ENCODE measurements at regions of chr1 and their contacts with region 1.

Region 1: GRCh38 chr1:228131766-228132165 is 8.3 kb upstream of the GUK1 start:
- DNase-seq: no peak
- ATAC-seq: no peak
- H3K4me3 Mint-ChIP-seq: no peak overlapping the region
- H3K27ac Mint-ChIP-seq: no peak overlapping the region
- H3K4me1 Mint-ChIP-seq: peaks cover 14% of the 10 kb centered on the region
- H3K27me3 Mint-ChIP-seq: peaks cover 22% of the 10 kb centered on the region

Region 2: GRCh38 chr1:228109073-228109961 is 22.4 kb before region 1 on chr1 and contains the start of gene MRPL55:
- CTCF ChIA-PET with region 1: interaction called, 14 read pairs
- DNase-seq: peak; percentile 98
- ATAC-seq: peak; percentile 96
- H3K4me3 Mint-ChIP-seq: peak within 1 kb of the TSS; percentile 85
- H3K27ac Mint-ChIP-seq: peak within 1 kb of the TSS; percentile 88
- H3K4me1 Mint-ChIP-seq: peaks cover 28% of the 10 kb centered on the region
- H3K27me3 Mint-ChIP-seq: no peaks in the 10 kb centered on the region
- total RNA-seq, gene MRPL55: 51.9 to 56.4 TPM

Region 3: GRCh38 chr1:228120857-228121489 is 10.8 kb before region 1 on chr1:
- CTCF ChIA-PET with region 1: interaction called, 20 read pairs
- DNase-seq: no peak
- ATAC-seq: peak; percentile 57
- H3K4me3 Mint-ChIP-seq: peak overlapping the region; percentile 31
- H3K27ac Mint-ChIP-seq: peak overlapping the region; percentile 49
- H3K4me1 Mint-ChIP-seq: peaks cover 7% of the 10 kb centered on the region
- H3K27me3 Mint-ChIP-seq: peaks cover 2% of the 10 kb centered on the region